MCF 10A (cell line): ENCODE measurements at regions of chr12 and their contacts with region 1.

Region 1: GRCh38 chr12:15789220-15790171 is at the start of gene EPS8:
- DNase-seq: peak; percentile 88
- H3K4me3 Mint-ChIP-seq: peak within 1 kb of the TSS; percentile 85
- H3K27ac Mint-ChIP-seq: peak within 1 kb of the TSS; percentile 91
- H3K4me1 Mint-ChIP-seq: peaks cover 28% of the 10 kb centered on the region
- H3K27me3 Mint-ChIP-seq: no peaks in the 10 kb centered on the region
- CTCF ChIP-seq: no peak
- total RNA-seq, gene EPS8: 85.3 and 96.2 TPM in 2 replicates

Region 2: GRCh38 chr12:15590180-15590826 is 199.2 kb before region 1 on chr12:
- CTCF ChIA-PET with region 1: interaction called, 9 read pairs
- POLR2A ChIA-PET with region 1: interaction called, 14 read pairs
- intact Hi-C with region 1: loop called (anchors 1 kb)
- DNase-seq: peak; percentile 79
- H3K4me3 Mint-ChIP-seq: peak overlapping the region; percentile 72
- H3K27ac Mint-ChIP-seq: peak overlapping the region; percentile 95
- H3K4me1 Mint-ChIP-seq: peaks cover 10% of the 10 kb centered on the region
- H3K27me3 Mint-ChIP-seq: no peaks in the 10 kb centered on the region
- CTCF ChIP-seq: peak; percentile 82

Region 3: DNA sequence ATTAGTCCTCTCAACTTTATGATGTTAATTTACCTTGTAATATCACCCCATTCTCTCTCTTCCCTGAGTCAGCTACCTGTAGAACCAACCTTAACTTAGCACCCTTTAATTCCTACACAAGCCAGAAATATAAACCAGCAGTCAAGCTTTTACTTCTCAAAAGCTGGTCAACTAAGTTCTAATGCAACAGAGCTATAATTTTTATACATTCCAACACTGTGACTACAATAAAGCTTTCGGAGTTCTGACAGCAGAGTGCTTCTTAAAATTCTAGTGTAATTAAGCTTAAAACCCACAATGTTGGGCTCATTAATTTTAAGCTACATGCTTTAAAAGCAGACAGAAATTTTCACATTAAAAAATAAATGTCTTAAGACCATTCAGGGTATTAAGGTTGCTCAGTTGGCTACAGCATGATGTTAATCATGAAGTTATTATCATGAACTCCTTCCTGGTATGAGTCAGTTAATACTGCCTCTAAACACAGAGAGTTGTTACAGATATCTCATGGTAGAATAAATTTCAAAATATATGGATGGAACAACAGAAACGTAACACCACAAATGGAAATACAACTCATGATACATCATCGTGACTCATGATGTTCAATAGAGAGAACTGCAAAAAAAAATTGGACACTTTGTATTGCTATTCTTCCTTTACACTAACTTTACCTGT is 127.1 kb before region 1 on chr12:
- CTCF ChIA-PET with region 1: no interaction called
- POLR2A ChIA-PET with region 1: interaction called, 17 read pairs
- intact Hi-C with region 1: loop called (anchors 2 kb)
- DNase-seq: peak; percentile 89
- H3K4me3 Mint-ChIP-seq: peak overlapping the region; percentile 55
- H3K27ac Mint-ChIP-seq: peak overlapping the region; percentile 97
- H3K4me1 Mint-ChIP-seq: peaks cover 12% of the 10 kb centered on the region
- H3K27me3 Mint-ChIP-seq: no peaks in the 10 kb centered on the region
- CTCF ChIP-seq: no peak

Region 4: GRCh38 chr12:15778126-15778525 is 11.4 kb before region 1 on chr12:
- CTCF ChIA-PET with region 1: interaction called, 15 read pairs
- POLR2A ChIA-PET with region 1: interaction called, 72 read pairs
- intact Hi-C with region 1: no loop called
- DNase-seq: no peak
- H3K4me3 Mint-ChIP-seq: no peak overlapping the region
- H3K27ac Mint-ChIP-seq: peak overlapping the region; percentile 92
- H3K4me1 Mint-ChIP-seq: peaks cover 38% of the 10 kb centered on the region
- H3K27me3 Mint-ChIP-seq: no peaks in the 10 kb centered on the region
- CTCF ChIP-seq: no peak

Region 5: GRCh38 chr12:15834575-15834974 is 45.1 kb after region 1 on chr12:
- CTCF ChIA-PET with region 1: no interaction called
- POLR2A ChIA-PET with region 1: interaction called, 12 read pairs
- intact Hi-C with region 1: no loop called
- DNase-seq: peak; percentile 45
- H3K4me3 Mint-ChIP-seq: no peak overlapping the region
- H3K27ac Mint-ChIP-seq: peak overlapping the region; percentile 32
- H3K4me1 Mint-ChIP-seq: peaks cover 12% of the 10 kb centered on the region
- H3K27me3 Mint-ChIP-seq: no peaks in the 10 kb centered on the region
- CTCF ChIP-seq: no peak

Region 6: DNA sequence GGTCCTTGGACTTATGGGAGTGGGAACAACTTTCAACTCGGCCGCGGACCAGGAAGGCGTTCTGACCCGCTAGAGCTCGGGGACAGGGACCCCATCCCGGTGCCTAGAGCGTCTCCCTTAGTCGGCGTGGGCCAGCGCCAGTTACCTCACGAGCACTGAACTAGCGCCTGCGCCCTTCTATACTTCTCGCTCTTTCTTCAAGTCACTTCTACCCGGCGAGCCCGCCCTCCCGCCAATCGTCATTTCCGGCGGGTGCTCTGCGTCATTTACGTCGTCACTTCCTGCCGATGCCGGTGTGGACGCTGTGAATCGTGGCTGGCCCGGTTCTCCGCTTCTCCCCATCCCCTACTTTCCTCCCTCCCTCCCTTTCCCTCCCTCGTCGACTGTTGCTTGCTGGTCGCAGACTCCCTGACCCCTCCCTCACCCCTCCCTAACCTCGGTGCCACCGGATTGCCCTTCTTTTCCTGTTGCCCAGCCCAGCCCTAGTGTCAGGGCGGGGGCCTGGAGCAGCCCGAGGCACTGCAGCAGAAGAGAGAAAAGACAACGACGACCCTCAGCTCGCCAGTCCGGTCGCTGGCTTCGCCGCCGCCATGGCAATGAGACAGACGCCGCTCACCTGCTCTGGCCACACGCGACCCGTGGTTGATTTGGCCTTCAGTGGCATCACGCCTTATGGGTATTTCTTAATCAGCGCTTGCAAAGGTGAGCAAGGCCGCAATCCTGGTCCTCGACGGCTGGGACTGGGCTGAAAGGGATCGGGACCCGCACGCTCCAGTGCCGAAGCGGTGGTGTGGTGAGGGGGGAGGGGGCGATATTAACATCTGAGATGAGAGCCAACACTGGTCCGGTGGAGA is 92.8 kb after region 1 on chr12 and contains the start of gene STRAP:
- CTCF ChIA-PET with region 1: interaction called, 3 read pairs
- POLR2A ChIA-PET with region 1: interaction called, 18 read pairs
- intact Hi-C with region 1: no loop called
- DNase-seq: peak; percentile 96
- H3K4me3 Mint-ChIP-seq: peak within 1 kb of the TSS; percentile 92
- H3K27ac Mint-ChIP-seq: peak within 1 kb of the TSS; percentile 95
- H3K4me1 Mint-ChIP-seq: peaks cover 26% of the 10 kb centered on the region
- H3K27me3 Mint-ChIP-seq: no peaks in the 10 kb centered on the region
- CTCF ChIP-seq: no peak
- total RNA-seq, gene STRAP: 203 and 233 TPM in 2 replicates